ENCODE measurements at regions of chr17 and their contacts with region 1.

Region 1: DNA sequence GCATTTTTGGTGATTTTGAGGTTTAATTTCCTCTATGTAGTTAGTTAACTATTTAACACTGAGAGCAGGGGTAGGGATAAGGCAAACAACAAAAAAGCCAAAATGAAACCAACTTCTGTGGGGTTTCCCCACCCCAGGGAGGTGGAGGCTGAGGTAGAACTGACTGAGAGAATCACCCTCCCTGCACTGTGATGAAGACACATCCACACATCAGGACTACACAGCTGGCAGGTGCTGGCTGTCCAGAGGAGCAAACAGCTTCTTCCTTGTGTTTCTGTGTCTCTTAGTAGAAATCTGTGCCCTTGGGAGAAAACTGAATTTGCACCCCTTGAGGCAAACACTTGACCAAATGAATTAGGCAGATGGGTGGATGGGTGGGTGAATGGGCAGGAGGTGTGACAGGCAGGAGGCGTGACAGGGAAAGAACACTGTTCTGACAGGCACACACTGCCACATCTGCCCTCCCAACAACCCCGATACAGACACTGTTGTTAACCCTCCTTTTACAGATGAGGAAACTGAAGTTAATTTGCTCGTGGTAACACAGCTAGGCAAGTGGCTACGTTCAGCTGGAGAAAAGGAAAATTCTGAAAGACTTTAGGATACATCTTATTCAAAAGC is 62.9 kb upstream of the AMZ2 start:
- DNase-seq: peak; percentile 65
- H3K4me3 ChIP-seq: peak overlapping the region; percentile 75
- H3K27ac ChIP-seq: peak overlapping the region; percentile 90
- H3K4me1 ChIP-seq: peaks cover 33% of the 10 kb centered on the region
- CTCF ChIP-seq: no peak

Region 2: GRCh38 chr17:68089887-68090286 is 95.0 kb before region 1 on chr17:
- CTCF ChIA-PET with region 1: no interaction called
- POLR2A ChIA-PET with region 1: interaction called, 11 read pairs
- intact Hi-C with region 1: no loop called
- DNase-seq: no peak
- H3K4me3 ChIP-seq: no peak overlapping the region
- H3K27ac ChIP-seq: no peak overlapping the region
- H3K4me1 ChIP-seq: peaks cover 46% of the 10 kb centered on the region
- CTCF ChIP-seq: no peak; the same call in 1 of the 2 replicates

Region 3: GRCh38 chr17:68141050-68141449 is 43.9 kb before region 1 on chr17:
- CTCF ChIA-PET with region 1: no interaction called
- POLR2A ChIA-PET with region 1: no interaction called
- intact Hi-C with region 1: no loop called
- DNase-seq: no peak
- H3K4me3 ChIP-seq: no peak overlapping the region
- H3K27ac ChIP-seq: no peak overlapping the region
- H3K4me1 ChIP-seq: no peaks in the 10 kb centered on the region
- CTCF ChIP-seq: no peak

Region 4: DNA sequence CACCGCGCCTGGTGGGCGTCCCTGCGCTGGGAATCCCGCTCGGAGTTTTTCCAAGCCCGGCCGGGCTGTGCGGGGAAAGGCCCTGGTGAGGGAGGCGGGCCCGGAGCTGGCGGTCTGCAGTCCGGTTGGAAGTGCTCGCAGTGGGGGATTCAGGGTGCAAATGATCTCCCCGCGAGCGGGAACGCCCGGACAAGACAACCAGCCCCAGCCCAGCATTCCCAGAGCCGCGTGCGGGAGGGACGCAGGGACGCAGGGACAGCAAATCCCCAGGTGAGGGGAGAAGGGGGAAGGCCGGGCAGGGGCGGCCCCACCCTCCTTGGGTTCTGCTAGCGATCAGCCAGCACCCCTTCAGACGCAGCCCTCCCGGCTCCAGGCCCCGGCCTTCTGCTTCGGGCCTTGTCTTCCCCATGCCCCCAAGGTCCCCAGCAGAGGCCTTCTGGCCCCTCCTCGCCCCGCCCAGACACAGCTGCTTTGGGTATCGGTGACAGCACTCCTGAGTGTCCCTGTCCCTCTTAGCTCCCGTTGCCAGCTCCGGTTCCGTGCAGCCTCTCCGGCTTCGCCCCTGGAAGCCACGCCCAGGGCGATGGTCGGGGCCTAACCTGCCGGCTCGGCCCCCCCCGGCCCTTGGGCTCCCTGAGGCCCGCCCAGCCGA is 12.1 kb after region 1 on chr17:
- CTCF ChIA-PET with region 1: interaction called, 7 read pairs
- POLR2A ChIA-PET with region 1: interaction called, 72 read pairs
- intact Hi-C with region 1: loop called (anchors 1 kb)
- DNase-seq: no peak
- H3K4me3 ChIP-seq: no peak overlapping the region
- H3K27ac ChIP-seq: no peak overlapping the region
- H3K4me1 ChIP-seq: peaks cover 39% of the 10 kb centered on the region
- CTCF ChIP-seq: no peak

Region 5: DNA sequence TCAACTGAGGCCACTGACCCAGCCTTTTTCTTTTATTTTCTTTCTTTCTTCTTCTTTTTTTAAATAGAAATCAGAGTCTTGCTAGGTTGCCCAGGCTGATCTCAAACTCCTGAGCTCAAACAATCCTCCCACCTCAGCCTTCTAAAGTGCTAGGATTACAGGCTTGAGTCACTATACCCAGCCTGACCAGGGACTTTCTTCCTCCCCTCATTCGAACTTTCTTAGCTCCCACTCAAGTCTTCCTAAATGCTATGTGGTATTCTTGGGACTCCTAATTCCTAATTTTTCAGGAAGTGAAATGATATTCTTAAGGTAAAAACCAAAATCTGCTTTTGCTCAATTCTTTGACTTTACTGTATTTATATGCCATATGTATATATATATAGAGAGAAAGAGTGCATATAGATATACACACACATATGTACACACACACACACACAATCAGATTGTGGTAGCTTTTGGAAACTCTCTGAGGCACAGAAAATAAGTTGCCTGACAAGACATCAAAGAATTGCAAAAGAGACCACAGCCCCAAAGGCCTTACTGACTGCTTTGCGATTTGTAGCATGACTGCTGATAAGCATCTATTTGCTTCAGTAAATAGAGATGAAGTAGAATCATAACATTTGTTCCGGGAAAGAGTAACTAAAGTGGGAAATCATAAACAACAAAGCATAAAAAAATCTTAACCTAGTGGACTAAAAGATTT is 53.4 kb after region 1 on chr17:
- CTCF ChIA-PET with region 1: no interaction called
- POLR2A ChIA-PET with region 1: interaction called, 55 read pairs
- intact Hi-C with region 1: loop called (anchors 2 kb)
- DNase-seq: no peak
- H3K4me3 ChIP-seq: peak overlapping the region; percentile 65
- H3K27ac ChIP-seq: peak overlapping the region; percentile 96
- H3K4me1 ChIP-seq: peaks cover 85% of the 10 kb centered on the region
- CTCF ChIP-seq: no peak

Region 6: GRCh38 chr17:68255731-68256538 is 71.0 kb after region 1 on chr17:
- CTCF ChIA-PET with region 1: no interaction called
- POLR2A ChIA-PET with region 1: interaction called, 17 read pairs
- intact Hi-C with region 1: no loop called
- DNase-seq: peak; percentile 56
- H3K4me3 ChIP-seq: peak overlapping the region; percentile 54
- H3K27ac ChIP-seq: peak overlapping the region; percentile 90
- H3K4me1 ChIP-seq: peaks cover 98% of the 10 kb centered on the region
- CTCF ChIP-seq: no peak

Region 7: DNA sequence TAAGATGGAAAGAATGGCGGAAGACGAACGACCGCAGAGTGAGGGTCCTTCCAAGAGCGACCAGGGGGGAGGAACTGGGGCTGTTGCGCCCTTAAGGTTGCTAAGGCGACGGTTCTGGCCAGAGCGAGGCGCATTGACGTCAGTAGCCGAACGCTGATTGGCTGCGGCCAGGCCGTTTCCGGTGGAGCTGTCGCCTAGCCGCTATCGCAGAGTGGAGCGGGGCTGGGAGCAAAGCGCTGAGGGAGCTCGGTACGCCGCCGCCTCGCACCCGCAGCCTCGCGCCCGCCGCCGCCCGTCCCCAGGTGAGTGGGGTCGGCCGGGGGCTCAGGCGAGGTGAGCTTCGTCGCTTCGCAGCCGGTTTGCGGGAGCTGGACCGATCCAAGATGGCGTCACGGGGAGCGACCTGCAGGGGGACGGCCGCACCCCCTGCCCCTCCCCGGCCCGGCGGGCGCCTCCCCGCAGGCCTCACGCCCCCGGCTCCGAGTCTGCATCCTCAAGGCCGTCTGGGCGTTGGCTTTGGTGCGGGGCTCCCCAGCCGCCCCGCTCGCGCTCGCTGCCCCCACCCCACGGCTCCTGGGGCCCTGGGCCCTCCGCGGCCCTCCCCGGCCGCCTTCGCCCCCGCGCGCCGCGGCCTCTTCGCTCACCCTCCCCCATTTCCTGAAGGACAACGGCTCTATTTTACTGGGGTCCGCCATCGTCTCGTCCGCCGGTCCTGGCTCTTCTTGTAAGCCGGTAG is 327.5 kb after region 1 on chr17 and contains the start of gene PRKAR1A:
- CTCF ChIA-PET with region 1: no interaction called
- POLR2A ChIA-PET with region 1: no interaction called
- intact Hi-C with region 1: loop called (anchors 5 kb)
- DNase-seq: peak; percentile 98
- H3K4me3 ChIP-seq: peak within 1 kb of the TSS; percentile 90
- H3K27ac ChIP-seq: peak within 1 kb of the TSS; percentile 65
- H3K4me1 ChIP-seq: peaks cover 48% of the 10 kb centered on the region
- CTCF ChIP-seq: no peak
- total RNA-seq, gene PRKAR1A: 158 and 228 TPM in 2 replicates

Measured in OCI-LY7 (cell line).